Heart left ventricle (tissue), 16 donors: ENCODE measurements at regions of chr13 and their contacts with region 1.

Region 1: GRCh38 chr13:23375001-23375971 is 58.2 kb downstream of the SACS start:
- DNase-seq: peak; percentile 97 to 99 (median 98)
- ATAC-seq: peak; percentile 94 to 97 (median 96)
- H3K4me3 ChIP-seq: peak overlapping the region; percentile 64 to 93 (median 84)
- H3K27ac ChIP-seq: peak overlapping the region; percentile 48 to 96 (median 90)
- H3K4me1 ChIP-seq: peaks cover 3 to 57% (median 46%) of the 10 kb centered on the region in 12 donors
- H3K27me3 ChIP-seq: no peaks in the 10 kb centered on the region
- CTCF ChIP-seq: peak in 8 of 12 donors; percentile 11 to 56 (median 36)
- POLR2A ChIP-seq: peak in 1 of 2 donors; percentile 69

Region 2: DNA sequence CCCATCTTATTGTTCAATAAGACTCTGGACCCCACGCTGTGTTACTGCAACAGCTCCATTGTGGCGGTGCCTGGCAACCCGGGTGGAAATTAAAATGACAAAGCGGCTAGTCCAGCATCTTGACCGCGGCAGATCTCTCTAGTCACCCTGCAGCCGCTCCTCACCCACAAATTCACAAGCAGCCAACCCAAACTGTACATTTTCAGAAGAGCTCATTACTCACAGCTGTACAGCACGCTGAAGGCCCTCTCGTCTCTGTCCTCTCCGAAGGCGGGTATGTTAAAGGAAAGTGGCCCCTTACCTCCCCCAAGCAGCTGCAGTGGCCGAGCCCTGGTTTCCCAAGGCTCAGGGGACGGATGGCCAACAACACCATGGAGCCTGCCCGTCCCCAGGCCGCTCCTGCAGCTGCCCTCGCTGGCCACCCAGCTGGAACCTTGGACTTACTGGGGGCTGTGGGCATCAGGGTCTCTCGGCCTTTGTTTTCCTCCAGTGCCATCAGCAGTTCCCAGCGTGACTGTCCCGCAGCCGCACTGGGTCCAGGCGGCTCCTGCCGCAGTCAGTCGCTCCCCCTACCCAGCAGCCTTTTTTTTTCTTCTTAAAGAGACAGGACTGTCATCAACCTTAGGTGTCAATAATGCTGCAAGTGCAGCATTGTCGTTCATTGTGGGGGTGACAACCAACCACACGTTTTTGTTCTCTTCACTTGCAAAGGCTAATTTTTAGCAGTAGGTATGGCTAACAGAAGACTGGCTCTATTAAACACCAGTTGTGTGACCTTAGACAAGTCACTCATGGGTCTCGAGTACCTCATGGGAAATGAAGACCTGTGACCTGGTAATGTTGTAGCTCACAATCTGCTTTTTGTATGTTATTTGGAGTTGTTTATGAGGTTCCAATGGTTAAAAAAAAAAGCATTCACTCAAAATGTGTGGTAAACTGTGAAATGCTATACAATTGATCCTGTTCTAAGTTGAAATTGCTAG is 58.2 kb after region 1 on chr13 and contains the start of gene SACS:
- intact Hi-C with region 1: loop called in 1 of 10 experiments (anchors 2 kb)
- DNase-seq: peak in 1 of 5 donors; percentile 58
- ATAC-seq: peak; percentile 74 to 88 (median 86)
- H3K4me3 ChIP-seq: peak within 1 kb of the TSS; percentile 43 to 73 (median 61)
- H3K27ac ChIP-seq: peak within 1 kb of the TSS in 10 of 12 donors; percentile 29 to 76 (median 66)
- H3K4me1 ChIP-seq: peaks cover 0 to 18% (median 3%) of the 10 kb centered on the region in 12 donors
- H3K27me3 ChIP-seq: no peaks in the 10 kb centered on the region
- CTCF ChIP-seq: no peak
- POLR2A ChIP-seq: no peak
- total RNA-seq, gene SACS: 8.8 to 29.3 (median 25.6) TPM

Region 3: DNA sequence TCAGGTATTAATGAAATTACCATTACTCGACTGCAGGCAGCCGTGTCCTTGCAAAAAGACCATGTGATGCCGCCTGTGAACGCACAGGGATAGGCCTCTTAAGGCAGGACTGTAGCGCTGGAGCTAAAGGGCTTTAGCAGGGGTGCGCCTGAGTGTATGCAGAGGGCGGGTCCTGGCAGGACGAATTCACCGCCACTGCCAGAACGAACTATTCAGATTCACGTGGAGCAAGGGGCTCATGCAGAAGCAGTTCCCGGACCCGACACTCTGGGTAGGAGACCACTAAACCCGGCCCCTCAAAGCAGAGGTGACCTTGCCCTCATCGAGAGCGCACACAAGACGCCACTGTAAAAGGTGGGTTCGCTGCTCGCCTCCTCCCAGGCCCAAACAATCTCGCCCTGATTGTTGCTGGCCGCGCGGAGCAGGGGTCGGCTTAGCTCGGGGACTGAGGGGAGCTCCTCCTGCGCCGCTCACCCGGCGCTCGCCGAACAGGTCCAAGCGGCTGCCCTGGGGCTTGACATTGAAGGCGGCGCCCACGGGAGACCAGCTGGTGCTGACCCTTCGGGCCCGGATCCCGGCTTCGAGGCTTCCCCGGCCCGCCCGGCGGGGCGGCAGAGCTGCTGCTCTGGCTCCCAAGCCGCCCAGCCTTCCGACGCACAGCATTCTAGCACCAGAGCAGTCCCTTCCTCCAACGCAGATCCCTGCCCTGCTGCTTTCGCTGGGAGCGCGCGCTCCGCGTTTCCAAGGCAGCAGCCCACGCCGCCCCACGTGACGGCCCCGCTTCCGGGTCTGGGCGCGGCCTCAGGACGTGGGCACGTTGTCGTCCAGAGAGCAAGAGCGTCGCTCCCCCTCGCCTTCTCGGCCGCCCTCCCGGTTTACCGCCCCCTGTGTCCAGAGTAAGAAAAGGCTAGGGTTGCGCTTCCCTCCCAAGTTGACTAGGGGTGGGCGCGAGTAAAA is 513.6 kb after region 1 on chr13 and contains the start of gene MIPEP:
- intact Hi-C with region 1: loop called in 2 of 10 experiments (anchors 5 to 10 kb)
- DNase-seq: peak; percentile 94 to 97 (median 94)
- ATAC-seq: peak; percentile 98 to 99 (median 98)
- H3K4me3 ChIP-seq: peak within 1 kb of the TSS; percentile 67 to 100 (median 93)
- H3K27ac ChIP-seq: peak within 1 kb of the TSS; percentile 51 to 92 (median 84)
- H3K4me1 ChIP-seq: peaks cover 0 to 26% (median 10%) of the 10 kb centered on the region in 12 donors
- H3K27me3 ChIP-seq: no peaks in the 10 kb centered on the region
- CTCF ChIP-seq: peak; percentile 60 to 95 (median 76)
- POLR2A ChIP-seq: peak; percentile 13 to 68
- total RNA-seq, gene MIPEP: 21.5 to 88.1 (median 42.1) TPM